ENCODE measurements at regions of chr13 and their contacts with region 1.

Region 1: GRCh38 chr13:30802953-30803478 is 67.7 kb downstream of the ALOX5AP start:
- DNase-seq: peak; percentile 95
- ATAC-seq: peak; percentile 96

Region 2: GRCh38 chr13:30132623-30133553 is 670.1 kb before region 1 on chr13:
- intact Hi-C with region 1: loop called (anchors 5 kb)
- DNase-seq: peak; percentile 98
- ATAC-seq: peak; percentile 95

Region 3: GRCh38 chr13:30355384-30355699 is 447.7 kb before region 1 on chr13:
- intact Hi-C with region 1: loop called (anchors 2 kb)
- DNase-seq: no peak
- ATAC-seq: peak; percentile 39

Region 4: GRCh38 chr13:30408319-30409101 is 394.5 kb before region 1 on chr13:
- intact Hi-C with region 1: loop called (anchors 10 kb)
- DNase-seq: peak; percentile 97
- ATAC-seq: peak; percentile 94

Region 5: DNA sequence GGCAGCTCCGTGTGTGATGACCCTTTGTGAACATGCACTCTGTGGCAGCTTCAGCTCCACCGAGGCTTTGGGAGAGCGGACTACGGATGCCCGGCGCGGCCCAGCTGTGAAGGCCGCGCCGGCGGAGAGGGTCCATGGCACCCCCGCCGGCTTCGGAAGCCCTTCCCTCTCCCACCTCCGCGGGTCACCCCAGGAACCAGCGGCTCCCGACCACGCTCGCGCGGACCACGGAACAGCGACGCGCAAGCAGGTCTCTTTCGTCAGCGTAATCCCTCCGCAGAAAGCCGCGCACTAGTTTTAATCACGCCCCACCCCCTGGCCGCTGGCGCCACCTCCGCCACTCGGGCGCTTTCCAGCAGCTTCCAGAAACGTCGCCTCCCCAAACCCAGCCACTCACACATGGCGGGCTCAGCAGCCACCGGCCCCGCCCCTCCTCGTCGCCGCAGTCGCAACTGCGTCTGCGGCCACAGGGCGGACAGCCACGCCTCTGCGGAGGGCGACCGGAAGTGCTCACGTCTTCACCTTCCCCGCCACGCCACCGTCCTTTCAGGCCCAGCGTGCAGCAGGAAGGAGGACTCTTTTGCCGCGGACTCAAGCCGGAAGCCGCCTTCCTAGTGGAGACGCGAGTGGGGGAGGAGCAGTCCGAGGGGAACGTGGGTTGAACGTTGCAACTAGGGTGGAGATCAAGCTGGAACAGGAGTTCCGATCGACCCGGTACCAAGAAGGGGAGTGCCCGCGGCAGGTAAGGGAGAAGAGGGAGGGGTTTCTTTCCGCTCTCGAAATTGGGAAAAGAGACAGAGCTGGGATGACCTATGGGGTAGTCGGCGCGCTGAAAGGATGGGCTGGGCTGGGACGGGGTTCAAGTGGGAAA is 185.5 kb before region 1 on chr13 and contains the start of gene USPL1:
- intact Hi-C with region 1: loop called (anchors 5 kb)
- DNase-seq: peak; percentile 99
- ATAC-seq: peak; percentile 97
- total RNA-seq, gene USPL1: 10.3 TPM

Region 6: DNA sequence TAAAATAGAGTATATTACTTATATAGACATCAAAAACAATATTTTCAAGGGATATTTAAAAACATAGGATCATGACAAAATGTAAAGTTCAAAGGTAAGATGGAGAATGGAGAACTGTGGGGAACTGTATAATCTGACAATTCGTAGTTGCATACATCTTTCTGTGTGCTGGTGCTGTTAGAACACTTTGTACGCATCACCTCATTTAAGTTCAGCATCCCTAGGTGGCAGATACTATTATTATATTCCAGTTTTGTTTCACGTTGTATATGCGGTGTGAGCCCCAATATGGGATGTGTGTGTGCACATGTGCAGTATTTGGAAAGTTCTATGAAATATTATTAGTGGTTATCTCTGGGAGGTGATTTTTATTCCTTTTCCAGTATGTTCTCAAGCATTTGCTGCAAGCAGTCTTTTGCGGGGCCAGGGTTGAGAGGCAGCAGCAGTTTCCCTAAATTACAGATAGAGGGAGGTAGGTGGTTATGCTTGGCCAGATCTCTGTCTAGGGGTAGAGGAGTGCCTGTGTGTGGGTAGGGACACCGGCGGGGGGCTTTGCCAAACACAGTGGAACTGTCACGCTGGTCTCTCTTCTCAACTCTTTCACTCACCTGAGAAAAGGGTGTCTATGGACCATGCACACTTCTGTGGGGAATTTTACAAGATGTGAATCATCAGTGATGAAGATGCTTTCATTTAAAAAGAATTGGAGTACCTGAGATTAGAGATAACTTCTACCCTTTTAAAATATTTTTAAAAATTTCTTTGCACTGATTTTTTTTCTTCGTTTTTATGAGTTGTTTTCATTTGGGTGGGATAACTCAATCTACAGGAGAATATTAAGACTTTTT is 123.3 kb before region 1 on chr13:
- intact Hi-C with region 1: loop called (anchors 1 kb)
- DNase-seq: no peak
- ATAC-seq: peak; percentile 74

Region 7: GRCh38 chr13:30818323-30818960 is 15.4 kb after region 1 on chr13:
- intact Hi-C with region 1: no loop called
- DNase-seq: no peak
- ATAC-seq: peak; percentile 69

Region 8: DNA sequence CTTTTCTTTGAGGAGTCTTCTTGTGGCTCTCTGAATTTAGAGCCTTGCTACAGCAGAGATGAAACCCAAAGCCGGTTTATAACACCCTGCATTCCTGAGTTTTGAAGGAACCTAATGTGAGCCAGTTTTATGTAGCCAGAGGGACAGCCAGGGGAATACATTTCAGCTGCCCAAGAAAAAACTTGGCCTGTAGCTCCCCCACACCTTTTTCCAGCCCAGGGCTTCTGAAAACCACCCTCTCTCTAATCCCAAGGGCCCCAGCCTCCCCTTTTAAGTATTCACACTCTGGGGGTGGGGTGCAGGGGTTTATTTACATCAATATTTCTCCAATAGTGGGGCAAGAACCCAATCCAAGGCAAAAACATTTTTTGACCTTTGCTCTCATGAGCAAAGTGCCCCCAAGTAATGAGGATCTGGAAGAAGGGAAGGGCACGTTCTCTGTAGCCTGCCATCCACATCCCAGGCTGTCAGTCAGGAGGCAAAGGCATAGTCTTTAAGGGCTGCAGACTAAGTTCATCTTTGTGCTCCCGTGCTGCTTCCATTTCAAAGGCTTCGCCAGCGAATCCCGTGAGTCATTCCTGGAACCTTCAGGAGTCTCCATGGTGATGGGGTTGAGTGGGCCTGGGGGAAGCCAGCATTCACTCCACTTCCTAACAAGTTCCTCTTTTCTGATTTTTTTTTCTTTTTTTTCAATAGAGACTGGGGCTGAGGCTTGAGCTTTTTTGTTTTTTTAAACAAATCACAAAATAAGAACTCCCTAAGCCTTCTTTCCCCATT is 69.9 kb after region 1 on chr13:
- intact Hi-C with region 1: no loop called
- DNase-seq: no peak
- ATAC-seq: no peak

Region 9: DNA sequence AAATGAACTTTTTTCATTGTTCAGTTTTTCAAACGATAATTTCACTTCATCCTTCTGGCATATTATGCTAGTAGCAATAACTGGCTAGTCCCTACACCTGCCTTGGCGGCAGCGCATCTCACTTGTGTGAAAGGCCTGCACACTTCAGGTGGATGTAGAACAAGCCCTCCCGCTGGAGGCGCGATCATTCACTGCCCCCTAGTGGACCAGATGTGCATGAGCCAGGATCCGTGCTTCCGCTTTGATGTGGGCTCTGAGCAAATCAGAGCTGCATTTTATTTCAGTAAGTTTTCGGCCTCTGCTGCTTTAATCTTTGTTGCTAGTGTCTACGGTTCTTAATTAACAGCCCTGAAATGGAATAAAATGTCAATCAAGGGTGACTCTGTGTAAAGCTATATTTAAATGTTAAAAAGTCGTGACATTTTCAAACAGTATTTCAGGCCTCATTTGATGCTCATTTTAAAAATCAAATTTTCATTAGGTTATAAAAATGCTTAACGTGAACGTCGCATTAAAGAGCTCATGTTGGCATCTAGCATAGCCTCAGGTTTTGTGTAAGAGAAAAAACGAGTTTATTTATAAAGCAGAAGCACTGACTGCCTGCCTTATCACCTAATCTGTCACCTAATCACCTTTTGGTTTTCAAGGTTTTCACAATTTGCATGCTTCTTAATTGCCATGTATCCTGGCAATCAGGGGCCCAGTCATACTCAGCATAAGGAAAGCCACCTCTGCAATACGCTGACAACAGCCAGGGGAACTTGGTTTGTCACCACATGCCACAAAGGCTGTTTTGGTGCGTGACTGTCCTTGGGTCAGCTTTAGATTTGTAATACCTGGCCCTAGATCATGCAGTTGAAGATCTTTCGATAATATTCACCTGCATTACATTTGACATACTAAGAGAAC is 241.6 kb after region 1 on chr13:
- intact Hi-C with region 1: loop called (anchors 5 kb)
- DNase-seq: peak; percentile 88
- ATAC-seq: peak; percentile 84